Breast epithelium (tissue), 4 donors: ENCODE measurements at regions of chrX and their contacts with region 1.

Region 1: GRCh38 chrX:153609917-153610428 is 11.0 kb upstream of the CCNQ start:
- DNase-seq: peak; percentile 39 to 67
- H3K4me3 ChIP-seq: peak overlapping the region; percentile 23 to 71 (median 44)
- H3K27ac ChIP-seq: peak overlapping the region in 1 of 2 donors; percentile 72
- H3K4me1 ChIP-seq: no peaks in the 10 kb centered on the region
- H3K27me3 ChIP-seq: peaks cover 0 to 73% of the 10 kb centered on the region in 2 donors
- CTCF ChIP-seq: peak; percentile 49 to 60 (median 57)
- POLR2A ChIP-seq: no peak

Region 2: GRCh38 chrX:153627675-153628111 is 17.7 kb after region 1 on chrX:
- intact Hi-C with region 1: no loop called
- DNase-seq: peak in 1 of 2 donors; percentile 59
- H3K4me3 ChIP-seq: no peak overlapping the region
- H3K27ac ChIP-seq: peak overlapping the region in 1 of 2 donors; percentile 38
- H3K4me1 ChIP-seq: no peaks in the 10 kb centered on the region
- H3K27me3 ChIP-seq: peaks cover 0 to 68% of the 10 kb centered on the region in 2 donors
- CTCF ChIP-seq: no peak
- POLR2A ChIP-seq: no peak

Region 3: GRCh38 chrX:154444755-154445246 is 834.8 kb after region 1 on chrX:
- intact Hi-C with region 1: loop called (anchors 5 kb)
- DNase-seq: no peak
- H3K4me3 ChIP-seq: peak overlapping the region; percentile 58 to 82 (median 62)
- H3K27ac ChIP-seq: peak overlapping the region; percentile 90
- H3K4me1 ChIP-seq: no peaks in the 10 kb centered on the region
- H3K27me3 ChIP-seq: peaks cover 0 to 57% of the 10 kb centered on the region in 2 donors
- CTCF ChIP-seq: no peak
- POLR2A ChIP-seq: no peak